ENCODE measurements at regions of chr6 and their contacts with region 1.

Region 1: DNA sequence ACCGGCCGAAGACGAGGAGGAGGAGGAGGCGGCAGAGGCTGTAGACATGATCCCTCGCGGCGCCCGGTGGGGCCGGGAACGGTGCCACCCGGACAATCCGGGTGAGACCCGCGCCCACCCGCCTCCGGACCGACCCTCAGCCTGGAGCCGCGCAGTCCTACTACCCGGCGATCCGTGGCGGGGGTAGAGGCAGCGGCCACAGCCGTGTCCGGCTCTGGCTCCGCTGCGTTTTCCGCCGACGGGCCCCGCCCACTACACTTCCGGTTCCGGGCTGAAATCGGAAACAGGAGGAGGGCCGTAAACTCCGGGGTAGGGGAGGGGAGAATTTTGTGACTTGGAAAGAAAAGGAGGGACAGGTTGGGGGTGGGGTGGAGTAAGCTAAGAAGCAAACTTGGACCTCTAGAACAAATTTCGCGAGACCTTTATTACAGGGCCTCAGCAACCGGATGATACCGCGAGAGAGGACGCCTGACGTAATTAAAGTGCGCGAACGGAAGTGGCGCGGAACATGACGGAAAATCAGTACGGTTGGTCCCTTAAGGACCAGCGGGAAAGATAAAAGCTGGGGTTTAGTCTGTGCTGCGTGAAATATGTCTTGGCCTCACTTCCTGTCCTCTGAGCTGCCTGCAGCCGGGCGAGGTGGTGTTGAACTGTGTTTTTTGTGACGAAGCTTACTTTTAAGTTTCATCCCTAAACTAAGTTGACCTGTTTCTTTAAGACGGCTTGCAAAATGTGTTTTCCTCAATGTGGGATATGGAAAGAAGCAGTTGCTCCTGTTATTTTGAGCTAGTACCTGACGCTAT is at the start of gene MAP3K7:
- DNase-seq: peak; percentile 97
- H3K4me3 Mint-ChIP-seq: peak within 1 kb of the TSS; percentile 98
- H3K27ac Mint-ChIP-seq: peak within 1 kb of the TSS; percentile 99
- H3K4me1 Mint-ChIP-seq: peaks cover 38% of the 10 kb centered on the region
- H3K27me3 Mint-ChIP-seq: peaks cover 6% of the 10 kb centered on the region
- total RNA-seq, gene MAP3K7: 26.3 to 28.7 TPM

Region 2: DNA sequence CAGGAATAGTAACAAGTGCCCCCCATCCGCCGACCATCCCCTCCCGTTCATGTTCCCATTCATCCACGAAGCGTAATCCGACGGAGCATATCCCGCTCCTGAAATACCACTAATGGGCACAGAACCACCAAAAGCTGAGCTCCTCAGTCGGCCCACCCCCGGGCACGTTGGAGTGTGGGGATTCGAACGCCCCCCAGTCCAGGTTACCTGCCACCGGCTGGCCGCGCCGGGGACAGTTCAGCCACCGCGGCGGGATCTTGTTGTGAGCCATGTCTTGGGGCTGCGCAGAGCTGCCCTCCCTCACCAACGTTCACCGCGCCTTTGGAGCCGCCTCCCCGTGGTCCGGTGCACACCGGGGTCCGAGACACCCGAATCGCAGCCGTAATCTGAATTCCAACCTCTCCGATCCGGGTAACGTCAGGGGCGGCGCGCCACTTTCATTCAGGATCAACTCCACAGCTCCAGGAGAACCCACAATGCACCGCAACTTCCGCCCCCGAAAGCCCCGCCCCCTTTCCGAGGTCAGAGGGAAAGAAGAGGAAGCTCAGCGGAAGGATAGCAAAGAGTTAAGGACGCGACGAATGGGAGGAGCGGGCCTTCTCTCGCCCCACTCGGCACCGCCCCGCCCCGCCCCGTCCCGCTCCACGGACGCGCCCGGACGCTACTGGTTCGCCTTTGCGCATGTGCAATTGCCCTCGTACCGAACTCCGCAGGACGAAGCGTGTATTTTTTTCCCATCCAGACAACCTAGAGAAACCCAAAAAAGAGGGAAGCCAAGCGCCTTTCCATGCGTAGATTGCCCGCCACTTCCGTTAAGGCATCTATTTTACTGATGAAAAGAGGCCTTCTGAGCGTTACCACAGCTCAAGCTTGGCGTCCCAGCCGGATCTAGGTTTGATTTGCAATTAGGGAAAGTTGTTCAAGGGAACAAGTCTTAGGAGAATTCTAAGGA is 1623.6 kb before region 1 on chr6 and contains the start of gene RNGTT:
- CTCF ChIA-PET with region 1: no interaction called
- POLR2A ChIA-PET with region 1: no interaction called
- intact Hi-C with region 1: loop called (anchors 2 kb)
- DNase-seq: peak; percentile 99
- H3K4me3 Mint-ChIP-seq: peak within 1 kb of the TSS; percentile 96
- H3K27ac Mint-ChIP-seq: peak within 1 kb of the TSS; percentile 84
- H3K4me1 Mint-ChIP-seq: peaks cover 39% of the 10 kb centered on the region
- H3K27me3 Mint-ChIP-seq: no peaks in the 10 kb centered on the region
- total RNA-seq, gene RNGTT: 21.3 to 22.0 TPM

Region 3: DNA sequence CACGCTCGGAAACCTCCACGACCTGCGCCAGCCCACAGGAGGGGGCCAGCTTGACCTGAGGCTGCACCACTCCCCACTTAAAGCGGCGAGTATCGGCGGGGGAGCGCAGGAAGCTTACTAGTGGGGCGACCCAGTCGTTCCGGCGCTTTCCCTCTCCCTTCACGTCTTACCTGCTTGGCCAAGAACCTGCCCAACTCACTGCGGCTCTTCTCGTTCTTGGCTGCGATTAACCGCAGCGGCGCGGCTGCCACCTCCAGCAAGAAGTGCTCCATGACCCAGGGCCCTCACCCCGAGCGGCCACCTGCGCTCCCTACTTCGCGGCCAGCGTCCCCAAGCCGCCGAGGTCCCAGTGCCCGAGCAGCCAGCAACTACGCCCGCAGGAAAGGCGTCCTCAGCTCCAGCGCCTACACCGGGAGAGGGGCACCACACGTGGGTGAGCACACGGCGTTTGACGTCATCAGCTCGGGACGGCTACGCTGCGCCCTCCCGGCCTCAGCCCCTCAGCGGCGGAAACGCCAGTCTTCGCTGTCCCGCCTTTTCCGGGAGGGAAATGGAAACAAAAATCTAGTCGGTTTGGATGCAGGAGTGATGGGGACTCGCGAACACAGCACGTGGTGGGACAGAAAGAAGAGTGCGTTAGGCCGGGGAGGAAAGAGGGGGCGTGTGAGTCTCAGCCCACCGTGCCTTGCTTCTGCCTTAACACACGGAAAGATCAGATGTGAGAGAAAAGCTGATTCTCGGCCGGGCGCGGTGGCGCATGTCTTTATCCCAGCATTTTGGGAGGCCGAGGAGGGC is 767.5 kb before region 1 on chr6 and contains the start of gene MDN1:
- CTCF ChIA-PET with region 1: no interaction called
- POLR2A ChIA-PET with region 1: no interaction called
- intact Hi-C with region 1: loop called (anchors 1 kb)
- DNase-seq: peak; percentile 94
- H3K4me3 Mint-ChIP-seq: peak within 1 kb of the TSS; percentile 98
- H3K27ac Mint-ChIP-seq: peak within 1 kb of the TSS; percentile 97
- H3K4me1 Mint-ChIP-seq: peaks cover 28% of the 10 kb centered on the region
- H3K27me3 Mint-ChIP-seq: no peaks in the 10 kb centered on the region
- total RNA-seq, gene MDN1: 39.1 to 40.2 TPM

Region 4: GRCh38 chr6:89952686-89953085 is 634.4 kb before region 1 on chr6:
- CTCF ChIA-PET with region 1: no interaction called
- POLR2A ChIA-PET with region 1: no interaction called
- intact Hi-C with region 1: loop called (anchors 2 kb)
- DNase-seq: peak; percentile 72
- H3K4me3 Mint-ChIP-seq: peak overlapping the region; percentile 8
- H3K27ac Mint-ChIP-seq: peak overlapping the region; percentile 69
- H3K4me1 Mint-ChIP-seq: peaks cover 68% of the 10 kb centered on the region
- H3K27me3 Mint-ChIP-seq: no peaks in the 10 kb centered on the region

Region 5: GRCh38 chr6:90483116-90483839 is 103.8 kb before region 1 on chr6:
- CTCF ChIA-PET with region 1: no interaction called
- POLR2A ChIA-PET with region 1: no interaction called
- intact Hi-C with region 1: no loop called
- DNase-seq: no peak
- H3K4me3 Mint-ChIP-seq: no peak overlapping the region
- H3K27ac Mint-ChIP-seq: no peak overlapping the region
- H3K4me1 Mint-ChIP-seq: peaks cover 32% of the 10 kb centered on the region
- H3K27me3 Mint-ChIP-seq: no peaks in the 10 kb centered on the region

Region 6: DNA sequence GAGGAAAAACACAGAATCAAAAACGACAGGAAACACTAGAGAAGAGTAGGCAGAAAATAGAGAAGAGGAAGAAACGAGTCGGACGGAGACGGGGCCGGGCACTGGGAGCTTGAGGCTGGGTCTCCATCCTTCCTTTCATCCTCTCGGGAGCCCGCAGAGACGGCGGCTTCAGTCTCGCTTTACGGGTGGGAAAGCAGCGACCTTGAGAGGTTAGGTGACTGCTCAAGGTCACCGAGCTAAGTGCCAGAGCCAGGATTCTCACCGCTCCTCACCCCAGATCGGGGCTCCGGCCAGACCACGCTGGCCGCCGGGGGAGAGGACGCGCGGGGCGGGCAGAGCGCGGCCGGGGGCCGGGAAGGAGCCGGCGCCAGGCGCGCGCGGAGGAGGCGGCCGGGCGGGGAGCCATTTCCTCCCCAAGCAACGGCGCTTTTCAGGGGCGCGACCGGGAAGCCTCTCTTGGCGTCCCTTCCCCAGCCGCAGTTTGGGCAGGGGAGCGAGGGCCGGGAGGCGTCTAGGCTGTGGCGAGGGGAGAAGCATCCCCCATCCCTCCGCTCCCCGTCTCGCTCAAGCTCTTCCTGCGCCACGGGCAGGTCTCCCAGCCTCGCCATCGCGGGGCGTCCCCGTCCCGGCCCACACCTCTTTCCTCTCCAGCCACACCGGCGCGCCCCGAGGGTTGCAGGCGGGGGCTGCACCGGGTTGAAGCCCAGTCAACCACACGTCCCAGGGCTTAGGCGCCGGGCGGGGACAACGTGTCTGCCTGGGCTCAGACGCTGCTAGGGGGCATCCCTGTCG is 23.9 kb after region 1 on chr6:
- CTCF ChIA-PET with region 1: no interaction called
- POLR2A ChIA-PET with region 1: no interaction called
- intact Hi-C with region 1: loop called (anchors 1 kb)
- DNase-seq: peak; percentile 49
- H3K4me3 Mint-ChIP-seq: peak overlapping the region; percentile 65
- H3K27ac Mint-ChIP-seq: no peak overlapping the region
- H3K4me1 Mint-ChIP-seq: peaks cover 10% of the 10 kb centered on the region
- H3K27me3 Mint-ChIP-seq: peaks cover 53% of the 10 kb centered on the region